ENCODE measurements at regions of chr14 and their contacts with region 1.

Region 1: GRCh38 chr14:68911594-68912227 is 67.4 kb downstream of the ACTN1 start:
- ATAC-seq: peak; percentile 86 to 100 (median 92)
- H3K4me3 ChIP-seq: no peak overlapping the region
- H3K27ac ChIP-seq: no peak overlapping the region
- H3K4me1 ChIP-seq: no peaks in the 10 kb centered on the region

Region 2: GRCh38 chr14:69055999-69056788 is 144.5 kb after region 1 on chr14:
- in situ Hi-C with region 1: loop called in 1 of 9 experiments (anchors 25 kb)
- ATAC-seq: peak in 7 of 8 experiments; percentile 35 to 97 (median 88)
- H3K4me3 ChIP-seq: no peak overlapping the region
- H3K27ac ChIP-seq: peak overlapping the region; percentile 60 to 74
- H3K4me1 ChIP-seq: peaks cover 17 to 20% of the 10 kb centered on the region in 2 donors

Region 3: GRCh38 chr14:69090187-69090789 is 178.6 kb after region 1 on chr14:
- in situ Hi-C with region 1: loop called in 3 of 9 experiments (anchors 10 to 25 kb)
- ATAC-seq: peak in 2 of 8 experiments; percentile 13 to 53
- H3K4me3 ChIP-seq: no peak overlapping the region
- H3K27ac ChIP-seq: no peak overlapping the region
- H3K4me1 ChIP-seq: peaks cover 0 to 7% of the 10 kb centered on the region in 2 donors

Region 4: GRCh38 chr14:69107407-69108003 is 195.8 kb after region 1 on chr14:
- in situ Hi-C with region 1: loop called in 3 of 9 experiments (anchors 25 kb)
- ATAC-seq: peak in 5 of 8 experiments; percentile 6 to 70 (median 33)
- H3K4me3 ChIP-seq: no peak overlapping the region
- H3K27ac ChIP-seq: no peak overlapping the region
- H3K4me1 ChIP-seq: no peaks in the 10 kb centered on the region

Region 5: GRCh38 chr14:69214393-69214792 is 302.7 kb after region 1 on chr14:
- in situ Hi-C with region 1: no loop called
- ATAC-seq: peak in 4 of 8 experiments; percentile 26 to 93 (median 38)
- H3K4me3 ChIP-seq: no peak overlapping the region
- H3K27ac ChIP-seq: no peak overlapping the region
- H3K4me1 ChIP-seq: no peaks in the 10 kb centered on the region